ENCODE measurements at regions of chr15 and their contacts with region 1.

Region 1: DNA sequence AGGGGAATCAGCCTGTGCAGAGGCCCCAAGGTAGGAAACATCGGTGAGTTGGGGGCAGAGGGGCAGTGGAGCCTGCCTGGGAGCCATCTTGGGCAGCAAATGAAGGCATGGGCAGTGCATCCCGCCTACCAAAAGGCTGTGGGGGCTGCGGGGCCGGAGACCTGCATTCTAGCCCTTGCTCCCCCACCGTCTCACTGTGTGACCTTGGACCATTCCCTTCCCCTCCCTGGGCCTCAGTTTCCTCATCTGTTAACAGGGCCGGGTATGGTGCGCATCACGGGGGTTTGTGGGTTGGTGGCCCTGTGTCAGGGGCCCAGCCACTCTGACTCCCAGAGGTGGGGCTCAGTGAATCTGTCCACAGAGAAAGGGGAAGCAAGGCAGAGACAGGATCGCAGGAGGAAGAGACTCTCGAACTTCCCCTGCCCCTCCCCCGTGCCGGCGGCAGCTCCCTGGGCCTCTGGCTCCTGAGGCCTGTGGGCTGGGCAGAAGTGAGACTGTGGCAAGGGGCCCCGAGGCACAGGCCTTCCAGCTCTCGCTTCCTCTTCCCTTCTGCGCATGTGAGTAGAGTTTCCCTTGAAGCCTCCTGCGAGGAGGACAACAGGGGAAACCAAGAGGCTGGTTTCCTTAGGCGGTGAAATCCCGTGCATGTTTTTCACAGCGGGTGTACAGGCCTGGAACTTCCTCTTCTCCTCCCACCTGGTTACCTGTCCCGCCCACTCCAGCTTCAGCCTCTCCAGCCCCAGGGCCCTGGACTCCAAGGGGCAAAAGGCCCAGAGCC is 42.9 kb downstream of the IDH2 start:
- DNase-seq: peak; percentile 90
- ATAC-seq: peak; percentile 96
- H3K4me3 Mint-ChIP-seq: peak overlapping the region; percentile 54
- H3K27ac Mint-ChIP-seq: peak overlapping the region; percentile 94
- H3K4me1 Mint-ChIP-seq: peaks cover 50% of the 10 kb centered on the region
- H3K27me3 Mint-ChIP-seq: no peaks in the 10 kb centered on the region
- CTCF ChIP-seq: no peak

Region 2: GRCh38 chr15:89690276-89691218 is 368.9 kb before region 1 on chr15 and contains the starts of genes PEX11A and WDR93:
- CTCF ChIA-PET with region 1: no interaction called
- POLR2A ChIA-PET with region 1: no interaction called
- intact Hi-C with region 1: no loop called
- DNase-seq: peak; percentile 80
- ATAC-seq: peak; percentile 96
- H3K4me3 Mint-ChIP-seq: peak within 1 kb of the TSS; percentile 84
- H3K27ac Mint-ChIP-seq: peak within 1 kb of the TSS; percentile 73
- H3K4me1 Mint-ChIP-seq: peaks cover 10% of the 10 kb centered on the region
- H3K27me3 Mint-ChIP-seq: peaks cover 2% of the 10 kb centered on the region
- CTCF ChIP-seq: no peak
- total RNA-seq, gene PEX11A: 3.3 to 4.0 TPM
- total RNA-seq, gene WDR93: not detected

Region 3: DNA sequence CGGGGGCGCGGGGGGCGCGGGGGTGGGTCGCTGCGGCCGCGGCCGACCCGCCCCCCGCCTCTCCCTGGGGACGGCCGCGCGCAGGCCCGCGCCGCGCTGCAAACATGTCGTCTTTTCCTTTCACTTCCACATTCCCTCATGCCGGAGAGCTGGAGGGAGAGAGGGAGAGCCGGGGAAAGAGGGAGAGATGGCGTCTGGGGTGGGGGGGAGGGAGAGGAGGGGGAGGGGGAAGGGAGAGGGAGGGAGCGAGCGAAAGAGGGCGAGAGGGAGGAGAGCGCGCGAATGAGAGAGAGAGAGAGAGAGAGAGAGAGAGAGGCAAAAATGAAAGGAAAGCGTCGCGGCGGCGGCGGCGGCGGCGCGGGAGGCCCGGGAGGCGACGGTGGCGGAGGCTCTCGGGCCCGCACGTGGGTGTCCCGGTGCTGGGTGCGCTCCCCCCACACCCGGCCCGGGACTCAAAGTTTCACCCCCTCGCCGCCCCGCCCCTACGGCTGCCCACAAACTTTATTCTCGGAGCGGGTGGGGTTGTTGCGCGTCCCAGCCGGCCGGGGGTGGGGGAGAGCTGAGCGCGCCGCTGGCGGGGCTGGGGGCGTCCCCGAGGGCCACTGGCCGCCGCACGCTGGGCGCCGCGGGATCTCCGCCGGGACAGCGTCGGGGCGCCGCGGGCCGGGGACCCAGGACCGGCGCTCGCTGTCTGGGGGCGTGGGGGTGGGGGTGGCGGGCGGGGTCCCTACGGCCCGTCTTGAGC is 57.5 kb before region 1 on chr15:
- CTCF ChIA-PET with region 1: no interaction called
- POLR2A ChIA-PET with region 1: interaction called, 4 read pairs
- intact Hi-C with region 1: loop called (anchors 10 kb)
- DNase-seq: peak; percentile 72
- ATAC-seq: peak; percentile 47
- H3K4me3 Mint-ChIP-seq: peak overlapping the region; percentile 78
- H3K27ac Mint-ChIP-seq: peak overlapping the region; percentile 89
- H3K4me1 Mint-ChIP-seq: peaks cover 54% of the 10 kb centered on the region
- H3K27me3 Mint-ChIP-seq: no peaks in the 10 kb centered on the region
- CTCF ChIP-seq: no peak

Region 4: GRCh38 chr15:90035095-90035827 is 24.1 kb before region 1 on chr15:
- CTCF ChIA-PET with region 1: no interaction called
- POLR2A ChIA-PET with region 1: interaction called, 10 read pairs
- intact Hi-C with region 1: no loop called
- DNase-seq: no peak
- ATAC-seq: no peak
- H3K4me3 Mint-ChIP-seq: no peak overlapping the region
- H3K27ac Mint-ChIP-seq: peak overlapping the region; percentile 91
- H3K4me1 Mint-ChIP-seq: peaks cover 84% of the 10 kb centered on the region
- H3K27me3 Mint-ChIP-seq: no peaks in the 10 kb centered on the region
- CTCF ChIP-seq: no peak

Measured in activated CD8-positive, alpha-beta T cell treated with anti-CD3 and anti-CD28 coated beads for 36 hours (primary cell).